ENCODE measurements at regions of chr3 and their contacts with region 1.

Region 1: DNA sequence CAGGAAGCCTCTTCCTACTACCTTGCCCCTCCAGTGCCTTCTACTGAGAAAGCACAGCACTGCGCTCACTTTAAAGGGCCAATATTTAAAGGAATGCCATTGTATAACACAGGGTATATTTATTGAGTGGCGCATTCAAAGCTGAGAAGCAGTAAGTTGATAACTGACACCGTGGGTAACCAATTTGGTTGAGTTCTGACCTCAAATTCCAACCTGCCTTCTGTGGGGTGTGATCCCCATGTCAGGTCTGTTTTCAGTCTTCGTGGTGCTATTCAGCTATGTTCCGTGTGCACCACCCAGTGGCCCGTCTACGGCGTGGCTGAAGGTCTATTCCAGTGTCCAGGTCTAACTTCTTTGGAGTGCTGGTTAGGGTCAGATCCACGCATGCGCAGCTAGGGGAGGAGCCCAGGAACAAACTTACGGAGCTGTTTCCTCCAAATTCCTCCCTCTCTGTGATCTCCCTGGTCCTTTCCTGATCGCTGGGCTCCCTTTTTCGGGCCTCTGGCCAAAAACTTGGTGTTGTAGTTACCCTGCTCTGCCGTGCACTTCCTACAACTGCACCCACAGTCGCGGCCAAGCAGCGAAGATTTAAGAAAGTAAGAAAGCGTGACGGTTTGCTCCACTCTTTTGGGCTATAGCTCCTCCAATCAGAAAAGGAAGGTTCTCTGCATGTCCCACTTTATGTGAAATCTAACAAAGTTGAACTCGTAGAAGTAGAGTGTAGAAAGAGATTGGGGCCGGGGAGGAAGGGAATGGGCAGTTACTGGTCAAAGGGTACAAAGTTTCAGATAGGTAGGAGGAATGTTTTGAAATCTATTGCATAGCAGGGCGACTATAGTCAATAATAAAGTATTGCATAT is 7.7 kb downstream of the LRRC2 start:
- DNase-seq: peak; percentile 84 to 89
- H3K4me3 ChIP-seq: peak overlapping the region; percentile 53; the same call in 1 of the 2 replicates
- H3K27ac ChIP-seq: 0 out of 2 replicates have a peak overlapping the region, but pooled peaks have one; percentile 22
- H3K4me1 ChIP-seq: 0 out of 2 replicates have a peak, but pooled peaks cover 4% of the 10 kb centered on the region
- H3K27me3 ChIP-seq: no peaks in the 10 kb centered on the region
- CTCF ChIP-seq: peak; percentile 64

Region 2: DNA sequence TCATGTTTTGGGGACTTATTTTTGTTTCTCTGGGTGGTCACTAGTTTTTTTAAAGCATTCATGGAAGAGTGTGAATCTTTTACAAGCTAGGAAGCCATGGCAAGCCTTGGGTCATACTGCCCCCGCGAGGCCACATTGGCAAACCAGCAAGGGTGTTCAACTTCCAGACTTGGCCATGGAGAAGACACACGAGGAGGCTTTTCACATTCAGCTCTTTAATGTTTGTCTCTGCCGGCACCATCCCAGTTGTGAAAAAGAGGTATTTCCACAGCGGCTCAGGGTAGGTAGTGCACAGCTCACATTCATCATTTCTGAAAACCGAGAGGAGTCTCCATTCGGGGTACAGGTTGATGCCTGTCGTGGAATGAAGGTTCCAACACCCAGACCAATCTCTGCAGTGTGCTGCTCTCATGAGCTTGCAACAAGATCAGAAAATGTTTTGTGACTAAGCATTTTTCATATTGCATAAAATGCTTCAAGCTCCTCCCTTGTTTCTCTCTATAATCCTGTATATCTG is 179.9 kb before region 1 on chr3:
- CTCF ChIA-PET with region 1: no interaction called
- POLR2A ChIA-PET with region 1: no interaction called
- intact Hi-C with region 1: loop called (anchors 5 kb)
- DNase-seq: peak; percentile 64 to 69
- H3K4me3 ChIP-seq: no peak overlapping the region
- H3K27ac ChIP-seq: no peak overlapping the region
- H3K4me1 ChIP-seq: peaks cover 27% of the 10 kb centered on the region
- H3K27me3 ChIP-seq: no peaks in the 10 kb centered on the region
- CTCF ChIP-seq: peak; percentile 76

Region 3: GRCh38 chr3:46517016-46517793 is 41.2 kb before region 1 on chr3:
- CTCF ChIA-PET with region 1: interaction called, 12 read pairs
- POLR2A ChIA-PET with region 1: no interaction called
- intact Hi-C with region 1: loop called (anchors 2 kb)
- DNase-seq: peak; percentile 62 to 93
- H3K4me3 ChIP-seq: no peak overlapping the region
- H3K27ac ChIP-seq: peak overlapping the region; percentile 75
- H3K4me1 ChIP-seq: peaks cover 26% of the 10 kb centered on the region
- H3K27me3 ChIP-seq: no peaks in the 10 kb centered on the region
- CTCF ChIP-seq: no peak

Region 4: GRCh38 chr3:46578973-46579755 is 20.8 kb after region 1 on chr3:
- CTCF ChIA-PET with region 1: no interaction called
- POLR2A ChIA-PET with region 1: no interaction called
- intact Hi-C with region 1: no loop called
- DNase-seq: no peak
- H3K4me3 ChIP-seq: no peak overlapping the region
- H3K27ac ChIP-seq: no peak overlapping the region
- H3K4me1 ChIP-seq: no peaks in the 10 kb centered on the region
- H3K27me3 ChIP-seq: no peaks in the 10 kb centered on the region
- CTCF ChIP-seq: no peak

Region 5: DNA sequence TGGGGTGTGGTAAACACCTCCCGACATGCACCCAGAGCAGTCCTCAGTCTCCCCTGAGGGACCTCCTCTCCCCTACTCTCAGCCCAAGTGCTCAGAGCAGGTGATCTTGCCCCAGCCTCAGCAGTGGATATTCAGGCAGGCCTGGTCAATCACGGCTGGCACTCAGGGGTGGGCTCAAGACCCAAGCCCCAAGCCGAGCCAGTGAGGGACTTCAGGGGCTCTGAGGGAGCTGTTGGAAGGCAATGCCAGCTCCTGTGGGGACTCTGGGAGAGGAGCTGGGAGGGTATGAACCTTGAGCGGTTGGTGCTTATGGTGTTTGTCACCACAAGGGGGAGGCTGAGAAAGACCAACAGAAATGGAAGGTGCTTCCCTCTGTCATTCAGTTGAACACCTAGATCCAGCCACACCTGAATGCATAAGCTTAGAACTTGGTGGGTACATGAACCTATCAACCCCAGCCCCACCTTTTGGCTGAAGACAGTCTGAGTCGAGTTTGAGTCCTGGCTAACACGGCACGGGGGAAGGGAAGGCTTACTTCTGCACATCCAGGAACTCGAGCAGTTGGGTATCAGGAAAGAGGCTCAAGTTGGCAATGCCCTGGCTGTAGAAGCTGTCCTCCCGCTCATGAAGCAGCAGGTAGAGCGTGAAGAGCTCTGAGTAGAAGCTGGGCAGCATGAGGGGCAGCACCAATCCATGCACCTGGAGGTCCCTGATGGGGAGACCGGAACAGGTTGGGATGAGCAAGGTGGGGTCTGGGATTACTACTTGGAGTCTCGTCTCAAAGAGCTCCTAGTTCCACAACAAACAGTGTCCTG is 115.8 kb after region 1 on chr3:
- CTCF ChIA-PET with region 1: no interaction called
- POLR2A ChIA-PET with region 1: no interaction called
- intact Hi-C with region 1: no loop called
- DNase-seq: no peak
- H3K4me3 ChIP-seq: no peak overlapping the region
- H3K27ac ChIP-seq: no peak overlapping the region
- H3K4me1 ChIP-seq: no peaks in the 10 kb centered on the region
- H3K27me3 ChIP-seq: no peaks in the 10 kb centered on the region
- CTCF ChIP-seq: peak; percentile 34; the same call in 1 of the 2 replicates

Region 6: GRCh38 chr3:46737329-46737731 is 178.9 kb after region 1 on chr3:
- CTCF ChIA-PET with region 1: no interaction called
- POLR2A ChIA-PET with region 1: no interaction called
- intact Hi-C with region 1: no loop called
- DNase-seq: no peak
- H3K4me3 ChIP-seq: no peak overlapping the region
- H3K27ac ChIP-seq: no peak overlapping the region
- H3K4me1 ChIP-seq: no peaks in the 10 kb centered on the region
- H3K27me3 ChIP-seq: no peaks in the 10 kb centered on the region
- CTCF ChIP-seq: no peak